ENCODE measurements at regions of chr1 and their contacts with region 1.

Region 1: DNA sequence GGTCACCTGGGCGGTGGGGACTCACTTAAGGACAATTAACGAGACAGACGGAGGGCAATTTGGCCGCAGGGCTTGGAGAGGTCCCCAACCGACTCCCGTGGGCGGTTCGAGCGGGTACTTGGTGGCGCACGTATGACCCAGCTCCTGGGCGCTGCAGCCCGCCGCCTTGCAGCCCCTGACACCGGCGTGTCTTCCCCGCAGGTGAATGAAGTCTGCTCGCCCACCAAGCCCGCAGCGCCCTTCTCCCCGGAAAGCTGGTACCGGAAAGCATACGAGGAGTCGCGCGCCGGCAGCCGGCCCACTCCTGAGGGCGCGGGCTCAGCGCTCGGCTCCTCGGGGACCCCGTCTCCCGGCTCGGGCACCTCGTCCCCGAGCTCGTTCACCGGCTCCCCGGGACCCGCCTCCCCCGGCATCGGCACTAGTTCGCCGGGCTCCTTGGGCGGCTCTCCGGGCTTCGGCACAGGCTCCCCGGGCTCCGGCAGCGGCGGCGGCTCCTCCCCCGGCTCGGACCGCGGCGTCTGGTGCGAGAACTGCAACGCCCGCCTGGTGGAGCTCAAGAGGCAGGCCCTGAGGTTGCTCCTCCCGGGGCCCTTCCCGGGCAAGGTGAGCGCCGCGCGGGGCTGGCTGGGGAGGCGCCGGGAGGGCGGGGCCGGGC is 1.4 kb downstream of the KIF26B start:
- DNase-seq: peak; percentile 93
- ATAC-seq: peak; percentile 83
- H3K4me3 Mint-ChIP-seq: peak overlapping the region; percentile 79
- H3K27ac Mint-ChIP-seq: no peak overlapping the region
- H3K4me1 Mint-ChIP-seq: peaks cover 11% of the 10 kb centered on the region
- H3K27me3 Mint-ChIP-seq: peaks cover 66% of the 10 kb centered on the region
- CTCF ChIP-seq: peak; percentile 61; the same call in 1 of the 2 replicates

Region 2: DNA sequence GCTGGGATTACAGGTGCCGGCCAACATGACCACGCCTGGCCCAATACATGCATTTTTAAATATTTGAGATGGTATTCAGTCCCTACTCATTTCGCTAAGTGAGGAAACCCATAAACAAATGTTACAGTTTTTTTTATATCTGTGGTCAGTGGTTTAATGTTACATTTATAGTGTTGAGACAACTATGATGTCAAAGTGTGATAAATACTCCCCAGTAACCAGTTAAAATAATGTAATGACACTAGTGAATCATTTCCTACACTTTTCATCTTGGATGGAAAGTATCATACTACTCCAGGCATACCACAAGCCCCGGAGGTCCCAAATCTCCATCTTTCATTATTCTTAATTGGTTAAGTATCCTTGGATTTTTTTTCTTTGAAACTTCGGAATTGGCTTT is 89.0 kb before region 1 on chr1:
- CTCF ChIA-PET with region 1: no interaction called
- POLR2A ChIA-PET with region 1: no interaction called
- DNase-seq: no peak
- ATAC-seq: no peak
- H3K4me3 Mint-ChIP-seq: no peak overlapping the region
- H3K27ac Mint-ChIP-seq: no peak overlapping the region
- H3K4me1 Mint-ChIP-seq: no peaks in the 10 kb centered on the region
- H3K27me3 Mint-ChIP-seq: no peaks in the 10 kb centered on the region; the same call in 1 of the 2 replicates
- CTCF ChIP-seq: no peak

Region 3: GRCh38 chr1:245107776-245108645 is 48.2 kb before region 1 on chr1:
- CTCF ChIA-PET with region 1: no interaction called
- POLR2A ChIA-PET with region 1: no interaction called
- DNase-seq: no peak
- ATAC-seq: peak; percentile 17
- H3K4me3 Mint-ChIP-seq: no peak overlapping the region
- H3K27ac Mint-ChIP-seq: peak overlapping the region; percentile 40
- H3K4me1 Mint-ChIP-seq: peaks cover 9% of the 10 kb centered on the region
- H3K27me3 Mint-ChIP-seq: no peaks in the 10 kb centered on the region; the same call in 1 of the 2 replicates
- CTCF ChIP-seq: no peak

Region 4: GRCh38 chr1:245180496-245181157 is 24.4 kb after region 1 on chr1:
- CTCF ChIA-PET with region 1: interaction called, 13 read pairs
- POLR2A ChIA-PET with region 1: interaction called, 4 read pairs
- DNase-seq: no peak
- ATAC-seq: peak; percentile 49
- H3K4me3 Mint-ChIP-seq: no peak overlapping the region
- H3K27ac Mint-ChIP-seq: peak overlapping the region; percentile 72
- H3K4me1 Mint-ChIP-seq: peaks cover 23% of the 10 kb centered on the region
- H3K27me3 Mint-ChIP-seq: no peaks in the 10 kb centered on the region
- CTCF ChIP-seq: no peak

Region 5: DNA sequence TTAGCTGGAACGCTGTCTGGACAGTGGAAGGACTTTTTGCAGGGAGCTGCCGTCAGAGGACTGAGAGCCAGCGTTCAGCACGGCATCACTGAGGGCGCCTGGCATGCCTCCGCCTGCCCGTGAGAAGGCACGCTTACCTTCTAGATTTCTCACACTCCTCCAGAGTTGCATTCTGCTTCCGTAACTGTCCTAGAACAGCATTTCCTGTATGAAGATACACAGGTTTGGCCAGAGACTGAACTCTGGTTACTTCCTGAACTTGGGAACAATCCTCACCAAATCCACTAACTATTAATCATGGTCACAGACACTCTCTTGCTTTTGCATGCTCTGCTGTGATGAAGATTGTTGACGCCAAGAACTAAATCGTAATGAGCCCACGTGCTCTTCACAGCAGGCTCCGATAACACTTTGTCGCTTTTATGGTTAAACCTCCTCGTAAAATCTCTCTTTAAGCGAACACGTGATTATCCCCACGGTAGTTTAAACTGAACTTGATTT is 92.1 kb after region 1 on chr1:
- CTCF ChIA-PET with region 1: interaction called, 12 read pairs
- POLR2A ChIA-PET with region 1: no interaction called
- DNase-seq: no peak
- ATAC-seq: no peak
- H3K4me3 Mint-ChIP-seq: no peak overlapping the region
- H3K27ac Mint-ChIP-seq: no peak overlapping the region
- H3K4me1 Mint-ChIP-seq: peaks cover 17% of the 10 kb centered on the region
- H3K27me3 Mint-ChIP-seq: no peaks in the 10 kb centered on the region; the same call in 1 of the 2 replicates
- CTCF ChIP-seq: no peak

Region 6: DNA sequence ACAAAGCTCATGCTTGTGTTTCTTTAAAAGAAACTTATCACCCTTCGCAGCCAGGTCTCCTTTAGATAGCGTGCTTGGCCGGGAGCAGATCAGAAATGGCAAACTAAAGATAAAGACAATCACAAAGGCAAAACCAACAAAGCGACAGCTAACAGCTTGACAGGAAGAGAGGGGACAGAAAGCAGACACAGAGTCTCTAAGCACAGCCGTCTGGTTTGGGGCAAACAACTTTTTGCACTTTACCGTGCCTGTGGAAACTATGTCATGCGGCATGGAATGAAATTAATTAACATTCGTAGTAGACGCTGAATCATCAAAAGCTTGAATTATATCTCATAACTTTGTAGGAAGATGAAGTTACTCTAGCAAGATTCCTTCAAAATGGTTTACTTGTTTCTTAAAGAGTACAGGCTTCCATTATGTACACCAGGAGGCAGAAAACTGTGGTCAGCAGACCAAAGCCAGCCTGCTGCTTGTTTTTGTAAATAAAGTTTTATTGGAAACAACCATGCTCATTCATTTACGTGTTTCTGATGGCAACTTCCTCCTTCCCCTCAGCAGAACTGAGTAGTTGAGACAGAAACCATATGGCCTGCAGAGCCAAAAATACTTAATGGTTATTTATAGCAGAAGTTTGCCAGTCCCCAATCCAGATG is 181.7 kb after region 1 on chr1:
- CTCF ChIA-PET with region 1: no interaction called
- POLR2A ChIA-PET with region 1: no interaction called
- DNase-seq: no peak
- ATAC-seq: no peak
- H3K4me3 Mint-ChIP-seq: no peak overlapping the region
- H3K27ac Mint-ChIP-seq: no peak overlapping the region
- H3K4me1 Mint-ChIP-seq: peaks cover 14% of the 10 kb centered on the region
- H3K27me3 Mint-ChIP-seq: peaks cover 19% of the 10 kb centered on the region
- CTCF ChIP-seq: no peak

Region 7: DNA sequence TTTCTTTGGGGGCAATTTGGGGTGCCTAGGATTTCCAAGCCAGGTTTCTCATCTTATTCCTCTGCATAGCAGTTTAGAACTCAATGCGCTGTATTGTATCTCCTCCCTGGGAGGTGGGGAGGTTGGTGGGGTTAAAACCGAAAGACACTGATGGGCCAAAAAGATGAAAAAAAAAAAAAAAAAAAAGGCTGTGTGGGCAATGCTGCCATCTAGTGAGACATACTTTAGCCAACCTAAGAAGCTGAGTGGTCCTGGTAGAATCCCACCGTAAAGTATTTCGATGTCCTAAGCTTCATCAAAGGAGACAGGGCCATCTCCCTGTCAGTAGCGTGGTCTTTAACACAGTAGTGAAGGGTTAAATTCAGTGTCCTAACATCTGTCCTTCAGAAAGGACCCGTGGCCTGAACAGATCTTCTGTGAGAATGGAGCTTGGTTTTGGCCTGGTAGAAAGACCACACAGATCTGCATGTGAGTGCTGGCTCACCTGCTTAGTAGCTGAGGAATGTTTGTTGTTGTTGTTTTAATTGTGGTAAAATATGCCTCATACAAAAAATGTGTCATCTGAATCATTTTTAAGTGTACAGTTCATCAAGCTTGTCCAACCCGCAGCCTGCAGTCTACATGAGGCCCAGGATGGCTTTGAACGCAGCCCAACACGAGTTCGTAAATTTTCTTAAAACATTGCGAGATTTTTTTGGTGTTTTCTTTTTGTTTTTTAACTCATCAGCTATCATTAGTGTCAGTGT is 224.8 kb after region 1 on chr1:
- CTCF ChIA-PET with region 1: interaction called, 67 read pairs
- POLR2A ChIA-PET with region 1: interaction called, 3 read pairs
- DNase-seq: no peak
- ATAC-seq: peak; percentile 38
- H3K4me3 Mint-ChIP-seq: no peak overlapping the region
- H3K27ac Mint-ChIP-seq: no peak overlapping the region
- H3K4me1 Mint-ChIP-seq: peaks cover 41% of the 10 kb centered on the region
- H3K27me3 Mint-ChIP-seq: no peaks in the 10 kb centered on the region; the same call in 1 of the 2 replicates
- CTCF ChIP-seq: no peak

Measured in WTC11 (cell line).